ENCODE measurements at regions of chr1 and their contacts with region 1.

Region 1: DNA sequence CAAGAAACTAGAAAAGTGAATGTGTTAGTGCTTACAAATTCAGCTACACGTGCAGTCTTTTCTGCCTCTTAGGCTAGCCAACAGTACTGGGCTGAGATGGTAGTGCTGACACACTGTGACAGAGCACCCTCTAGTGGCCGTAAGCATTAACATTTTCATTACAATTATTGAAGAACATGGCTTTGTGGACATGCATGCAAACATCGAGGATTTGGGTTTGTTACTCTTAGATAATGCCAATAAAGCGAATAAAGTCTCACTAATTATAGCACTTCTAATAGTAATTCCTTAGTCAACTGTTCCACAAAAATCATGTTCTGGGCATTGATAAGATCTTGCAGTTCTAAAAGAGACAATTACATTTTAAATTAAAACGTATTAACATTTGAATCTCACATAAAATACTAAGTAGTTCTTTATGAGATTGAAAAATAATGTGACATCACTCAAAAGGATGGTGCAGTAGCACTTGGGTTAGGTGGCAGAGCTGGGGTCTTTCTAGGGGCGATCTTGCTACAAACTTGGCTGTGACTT is 47.1 kb downstream of the MYSM1 start:
- DNase-seq: no peak

Region 2: DNA sequence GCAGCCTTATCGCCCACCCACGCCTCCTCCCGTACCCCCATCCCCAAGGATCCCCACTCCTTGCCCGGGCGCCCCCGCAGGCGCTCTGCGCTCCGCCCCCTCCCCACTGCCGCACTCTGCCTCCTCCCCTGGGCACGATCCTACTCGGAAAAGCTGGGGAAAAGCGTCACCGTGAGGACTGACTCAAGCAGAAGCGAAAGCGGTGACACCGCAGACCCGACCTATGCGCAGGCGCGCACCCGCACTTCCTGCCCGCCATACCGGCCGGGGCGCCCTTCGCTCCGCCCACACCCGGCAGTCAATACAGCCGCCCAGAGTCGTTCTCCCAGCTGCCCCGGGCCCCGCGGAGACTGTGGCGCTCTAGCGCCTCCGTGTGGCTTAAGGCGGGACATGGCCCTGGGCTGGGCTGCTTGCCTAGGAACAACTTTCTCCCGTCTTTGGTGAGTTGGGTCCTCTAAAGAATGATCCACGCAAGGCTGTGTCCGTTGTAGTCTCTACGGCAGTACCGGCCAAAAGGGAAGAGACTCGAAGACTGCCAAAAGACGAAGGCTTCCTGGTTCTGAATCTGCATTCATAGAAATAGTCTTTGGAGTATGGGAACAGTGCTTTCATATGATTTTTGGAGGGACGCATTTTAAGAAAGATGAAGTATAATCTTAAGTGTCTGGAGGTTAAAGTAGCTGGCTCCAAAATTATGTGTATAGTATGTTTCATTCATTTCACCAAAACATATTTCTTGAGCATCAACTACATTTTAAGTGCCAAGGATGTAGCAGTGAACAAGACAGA is 106.0 kb before region 1 on chr1 and contains the start of gene OMA1:
- intact Hi-C with region 1: loop called (anchors 10 kb)
- DNase-seq: peak; percentile 99
- total RNA-seq, gene OMA1: 32.6 TPM

Measured in cardiac septum (tissue), 1 donor.